Activated CD4-positive, alpha-beta T cell treated with anti-CD3 and anti-CD28 coated beads, Interleukin-2, amount 10 ng/mL, durations not matched to agents 24 days and 14 days (primary cell): ENCODE measurements at regions of chr12 and their contacts with region 1.

Region 1: DNA sequence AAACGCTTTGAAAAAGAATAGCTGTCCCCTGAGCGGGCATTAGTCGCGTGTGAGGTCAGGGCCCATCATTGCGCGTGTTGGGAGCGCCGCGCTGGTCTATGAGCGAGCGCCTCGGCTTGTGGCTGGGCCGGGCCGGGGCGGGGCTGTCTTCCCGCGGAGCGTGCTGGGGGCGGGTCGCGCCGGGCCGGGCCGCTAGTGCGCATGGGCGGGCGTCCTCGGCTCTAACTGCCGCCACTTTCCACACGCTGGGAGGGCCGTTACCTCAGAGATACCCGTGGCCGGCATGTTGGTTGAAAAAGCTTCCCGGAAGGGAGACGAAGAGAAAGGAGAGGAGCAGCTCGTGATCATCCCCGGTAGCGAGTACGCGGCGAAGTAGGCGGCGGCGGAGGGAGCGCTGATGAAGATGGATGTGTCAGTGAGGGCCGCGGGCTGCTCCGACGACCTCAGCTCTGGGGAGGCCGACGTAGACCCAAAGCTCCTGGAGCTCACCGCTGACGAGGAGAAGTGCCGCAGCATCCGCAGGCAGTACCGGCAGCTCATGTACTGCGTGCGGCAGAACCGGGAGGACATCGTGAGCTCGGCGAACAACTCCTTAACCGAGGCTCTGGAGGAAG is at the start of gene EID3:
- DNase-seq: peak; percentile 98
- H3K4me3 Mint-ChIP-seq: peak within 1 kb of the TSS; percentile 94
- H3K27ac Mint-ChIP-seq: peak within 1 kb of the TSS; percentile 98
- H3K4me1 Mint-ChIP-seq: peaks cover 57% of the 10 kb centered on the region
- H3K27me3 Mint-ChIP-seq: no peaks in the 10 kb centered on the region
- total RNA-seq, gene EID3: 9.0 and 9.7 TPM in 2 replicates

Region 2: DNA sequence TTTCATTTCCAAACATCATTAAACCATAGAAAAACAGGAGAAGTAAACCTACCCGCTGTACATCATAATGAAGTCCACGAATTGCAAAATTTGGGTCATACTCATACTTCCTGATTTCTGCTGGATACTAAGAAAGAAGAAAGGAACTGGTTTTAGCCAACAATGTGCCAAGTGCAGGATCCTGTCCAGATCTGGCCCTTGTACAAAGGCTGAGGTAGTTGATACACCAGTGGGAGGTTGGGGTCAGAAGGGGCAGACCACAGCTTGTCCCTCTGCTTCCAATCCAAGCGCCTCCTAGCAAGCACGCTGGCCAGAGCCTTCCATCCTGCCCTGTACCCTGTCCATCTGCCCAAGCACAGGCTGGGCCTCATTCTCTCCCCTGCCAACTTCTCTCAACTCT is 496.8 kb before region 1 on chr12:
- intact Hi-C with region 1: no loop called
- DNase-seq: no peak
- H3K4me3 Mint-ChIP-seq: no peak overlapping the region
- H3K27ac Mint-ChIP-seq: no peak overlapping the region
- H3K4me1 Mint-ChIP-seq: peaks cover 3% of the 10 kb centered on the region
- H3K27me3 Mint-ChIP-seq: no peaks in the 10 kb centered on the region

Region 3: DNA sequence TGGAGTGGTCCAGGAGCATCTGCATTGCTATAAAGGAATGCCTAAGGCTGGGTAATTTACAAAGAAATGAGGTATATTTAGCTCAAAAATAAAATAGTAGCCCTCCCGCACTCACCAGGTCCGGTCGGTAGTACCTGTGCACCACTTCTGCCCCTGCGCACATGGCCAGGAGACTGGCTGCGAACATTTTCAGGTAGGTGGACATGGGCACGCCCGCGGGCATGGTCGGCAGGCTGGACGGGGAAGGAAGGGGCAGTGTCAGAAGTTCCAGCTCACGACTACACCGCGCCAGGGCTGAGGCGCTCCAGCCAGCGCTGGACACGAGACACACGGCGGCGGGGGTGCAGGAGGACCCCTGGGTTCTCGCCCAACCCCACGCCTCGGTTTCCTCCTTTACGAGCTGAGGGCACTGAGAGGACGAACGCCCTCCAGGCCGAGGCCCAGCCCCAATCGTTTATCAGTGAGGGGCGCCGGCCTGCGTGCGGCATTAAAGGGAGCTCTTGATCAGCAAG is 347.1 kb before region 1 on chr12:
- intact Hi-C with region 1: loop called (anchors 5 kb)
- DNase-seq: no peak
- H3K4me3 Mint-ChIP-seq: peak overlapping the region; percentile 96
- H3K27ac Mint-ChIP-seq: peak overlapping the region; percentile 97
- H3K4me1 Mint-ChIP-seq: peaks cover 25% of the 10 kb centered on the region
- H3K27me3 Mint-ChIP-seq: no peaks in the 10 kb centered on the region

Region 4: DNA sequence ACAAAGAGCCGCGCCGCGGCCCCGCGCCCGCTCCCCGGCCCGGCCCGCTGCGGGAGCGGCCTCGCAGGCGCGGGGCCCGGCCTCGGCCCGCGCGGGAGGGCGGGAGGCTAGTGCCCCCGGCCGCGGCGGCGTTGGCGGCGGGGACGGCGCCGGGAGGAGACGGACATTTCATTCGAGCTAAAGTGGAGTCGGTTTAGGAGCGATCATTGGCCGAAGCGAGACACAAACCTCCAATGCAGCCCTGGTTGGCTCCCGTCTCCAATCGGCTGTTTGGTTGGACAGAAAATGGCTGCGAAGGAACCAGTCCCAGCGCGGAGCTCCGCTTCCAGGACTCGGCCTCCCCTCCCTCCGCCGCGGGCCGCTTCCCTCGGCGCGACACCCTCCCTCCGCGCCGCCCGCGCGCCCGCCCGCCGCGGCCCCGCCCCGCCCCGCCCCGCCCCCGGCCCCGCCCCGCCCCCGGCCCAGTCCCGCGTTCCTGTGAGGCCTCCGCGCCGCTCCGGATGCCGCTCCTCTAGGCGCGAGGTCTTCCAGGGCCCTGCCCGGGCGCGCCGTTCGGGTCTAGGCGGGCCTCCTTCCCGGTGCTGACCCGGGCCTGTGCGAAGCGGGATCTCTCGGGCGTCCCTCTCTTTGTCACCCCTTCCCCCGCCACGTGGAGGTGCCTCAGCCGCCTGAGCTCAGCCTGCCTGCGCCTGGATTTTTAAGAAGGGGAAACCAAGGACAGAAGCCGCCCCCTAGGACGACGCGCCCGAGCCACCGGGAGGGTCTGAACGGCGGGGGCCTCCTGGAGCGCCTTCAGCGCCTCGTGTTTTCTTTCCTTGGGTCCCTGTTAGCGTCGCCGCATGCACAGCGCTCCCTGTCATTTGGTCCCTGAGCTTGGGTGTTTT is 165.5 kb before region 1 on chr12 and contains the start of gene NFYB:
- intact Hi-C with region 1: loop called (anchors 5 kb)
- DNase-seq: peak; percentile 98
- H3K4me3 Mint-ChIP-seq: peak within 1 kb of the TSS; percentile 87
- H3K27ac Mint-ChIP-seq: peak within 1 kb of the TSS; percentile 91
- H3K4me1 Mint-ChIP-seq: peaks cover 16% of the 10 kb centered on the region
- H3K27me3 Mint-ChIP-seq: peaks cover 17% of the 10 kb centered on the region
- total RNA-seq, gene NFYB: 25.4 and 28.6 TPM in 2 replicates